SK-N-SH (cell line): ENCODE measurements at regions of chr10 and their contacts with region 1.

Region 1: GRCh38 chr10:100303724-100304319 is 17.3 kb upstream of the BLOC1S2 start:
- DNase-seq: peak; percentile 57
- H3K4me3 ChIP-seq: no peak overlapping the region; a peak in 1 of 4 replicates
- H3K27ac ChIP-seq: no peak overlapping the region
- H3K4me1 ChIP-seq: no peaks in the 10 kb centered on the region
- H3K27me3 ChIP-seq: peaks cover 31% of the 10 kb centered on the region
- CTCF ChIP-seq: peak; percentile 70
- EP300 ChIP-seq: no peak
- RAD21 ChIP-seq: peak; percentile 76

Region 2: DNA sequence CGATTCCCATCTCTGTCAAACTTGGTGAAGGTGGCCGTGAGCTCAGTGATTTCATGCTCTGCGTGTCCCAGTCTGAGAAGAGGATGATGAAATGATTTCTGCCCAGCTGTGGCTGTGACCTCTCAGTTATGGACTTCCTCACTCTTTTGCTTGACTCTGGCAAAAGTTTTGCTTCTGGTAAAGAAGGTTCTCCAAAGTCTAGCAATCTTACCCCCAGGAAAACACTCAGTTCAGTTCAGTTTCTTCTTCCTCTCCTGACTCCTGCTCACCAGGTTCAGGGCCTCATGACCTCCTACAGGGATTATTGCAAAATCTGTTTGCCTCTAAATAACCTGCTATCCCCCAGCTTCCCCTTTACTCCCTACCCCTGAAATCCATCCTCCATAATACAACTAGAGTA is 12.5 kb before region 1 on chr10:
- CTCF ChIA-PET with region 1: interaction called, 18 read pairs
- POLR2A ChIA-PET with region 1: no interaction called
- DNase-seq: no peak
- H3K4me3 ChIP-seq: no peak overlapping the region
- H3K27ac ChIP-seq: no peak overlapping the region
- H3K4me1 ChIP-seq: peaks cover 4 to 5% of the 10 kb centered on the region in 2 experiments; a peak in 2 of 4 replicates
- H3K27me3 ChIP-seq: peaks cover 47% of the 10 kb centered on the region; the same call in 1 of the 2 replicates
- CTCF ChIP-seq: no peak
- EP300 ChIP-seq: no peak
- RAD21 ChIP-seq: no peak

Region 3: DNA sequence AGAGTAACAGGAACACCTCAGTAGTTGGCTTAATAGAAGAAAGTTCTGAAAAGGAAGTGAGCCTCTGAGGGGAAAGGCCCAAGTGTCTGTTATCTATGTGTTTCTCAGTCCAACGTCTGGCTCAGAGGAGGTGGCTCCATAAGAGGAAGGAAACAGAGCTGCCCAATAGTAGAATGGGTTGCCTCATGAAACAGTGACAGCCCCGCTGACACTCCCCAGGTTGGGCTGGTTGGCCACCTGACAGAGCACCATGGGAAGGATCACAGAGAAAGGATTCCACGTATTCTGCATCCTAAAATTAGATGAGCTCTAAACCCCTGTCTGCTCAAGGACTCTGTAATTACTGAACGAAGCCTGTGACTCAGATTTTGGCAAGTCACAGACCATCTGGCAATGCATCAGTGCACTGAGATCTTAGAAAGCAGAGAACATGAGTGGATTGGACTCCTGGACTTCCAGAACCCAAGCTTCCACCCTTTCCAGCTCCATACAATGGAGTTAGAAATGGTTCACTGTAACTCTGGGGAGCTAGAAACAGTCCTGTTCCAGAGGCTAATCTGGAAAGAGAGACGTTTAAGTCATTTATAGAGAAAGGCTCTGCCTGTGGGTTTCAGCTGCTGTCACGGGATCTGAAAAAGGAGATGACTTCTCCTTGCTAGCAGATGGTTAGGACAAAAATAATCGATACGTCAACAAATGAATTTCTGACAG is 23.3 kb after region 1 on chr10:
- CTCF ChIA-PET with region 1: interaction called, 14 read pairs
- POLR2A ChIA-PET with region 1: no interaction called
- DNase-seq: no peak
- H3K4me3 ChIP-seq: no peak overlapping the region
- H3K27ac ChIP-seq: no peak overlapping the region
- H3K4me1 ChIP-seq: no peaks in the 10 kb centered on the region
- H3K27me3 ChIP-seq: peaks cover 39% of the 10 kb centered on the region
- CTCF ChIP-seq: no peak
- EP300 ChIP-seq: no peak
- RAD21 ChIP-seq: no peak

Region 4: DNA sequence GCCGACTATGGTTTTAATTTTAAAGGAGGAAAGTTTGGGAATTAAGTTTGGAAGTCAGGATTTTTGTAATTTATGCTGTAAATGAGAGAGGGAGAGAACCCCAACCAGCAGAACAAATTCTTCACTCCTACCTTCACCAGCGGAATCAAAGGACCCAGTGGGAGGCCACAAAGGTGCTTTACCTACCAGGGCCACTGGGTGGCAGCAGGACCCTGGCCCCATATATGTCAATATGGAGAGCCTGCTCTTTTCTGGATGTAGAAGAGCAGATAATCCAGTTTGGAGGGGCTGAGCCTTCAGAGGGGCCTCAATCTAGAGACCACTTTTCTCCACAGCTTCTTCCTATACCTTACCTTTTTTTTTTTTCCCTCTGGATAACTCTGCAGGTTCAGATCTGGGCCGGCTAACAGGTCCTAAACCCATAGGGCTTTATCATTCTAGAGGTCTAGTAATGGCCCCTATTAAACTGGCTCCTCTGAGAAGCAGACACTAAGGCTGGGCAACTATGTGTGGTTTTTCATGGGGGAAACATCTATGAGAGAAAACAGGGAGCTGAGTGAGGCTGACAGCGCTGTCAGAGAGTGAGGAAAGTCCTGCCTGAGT is 34.7 kb after region 1 on chr10:
- CTCF ChIA-PET with region 1: interaction called, 13 read pairs
- POLR2A ChIA-PET with region 1: no interaction called
- DNase-seq: peak; percentile 78
- H3K4me3 ChIP-seq: no peak overlapping the region; a peak in 1 of 4 replicates
- H3K27ac ChIP-seq: no peak overlapping the region
- H3K4me1 ChIP-seq: peaks cover 0 to 12% of the 10 kb centered on the region in 2 experiments; a peak in 1 of 4 replicates
- H3K27me3 ChIP-seq: peaks cover 14% of the 10 kb centered on the region; the same call in 1 of the 2 replicates
- CTCF ChIP-seq: peak; percentile 90
- EP300 ChIP-seq: no peak
- RAD21 ChIP-seq: peak; percentile 97

Region 5: GRCh38 chr10:100508691-100509150 is 204.9 kb after region 1 on chr10:
- CTCF ChIA-PET with region 1: interaction called, 10 read pairs
- POLR2A ChIA-PET with region 1: no interaction called
- DNase-seq: peak; percentile 70
- H3K4me3 ChIP-seq: no peak overlapping the region
- H3K27ac ChIP-seq: no peak overlapping the region
- H3K4me1 ChIP-seq: peaks cover 0 to 15% of the 10 kb centered on the region in 2 experiments; a peak in 2 of 4 replicates
- H3K27me3 ChIP-seq: no peaks in the 10 kb centered on the region
- CTCF ChIP-seq: peak; percentile 81
- EP300 ChIP-seq: no peak
- RAD21 ChIP-seq: peak; percentile 94